ENCODE measurements at regions of chr5 and their contacts with region 1.

Region 1: DNA sequence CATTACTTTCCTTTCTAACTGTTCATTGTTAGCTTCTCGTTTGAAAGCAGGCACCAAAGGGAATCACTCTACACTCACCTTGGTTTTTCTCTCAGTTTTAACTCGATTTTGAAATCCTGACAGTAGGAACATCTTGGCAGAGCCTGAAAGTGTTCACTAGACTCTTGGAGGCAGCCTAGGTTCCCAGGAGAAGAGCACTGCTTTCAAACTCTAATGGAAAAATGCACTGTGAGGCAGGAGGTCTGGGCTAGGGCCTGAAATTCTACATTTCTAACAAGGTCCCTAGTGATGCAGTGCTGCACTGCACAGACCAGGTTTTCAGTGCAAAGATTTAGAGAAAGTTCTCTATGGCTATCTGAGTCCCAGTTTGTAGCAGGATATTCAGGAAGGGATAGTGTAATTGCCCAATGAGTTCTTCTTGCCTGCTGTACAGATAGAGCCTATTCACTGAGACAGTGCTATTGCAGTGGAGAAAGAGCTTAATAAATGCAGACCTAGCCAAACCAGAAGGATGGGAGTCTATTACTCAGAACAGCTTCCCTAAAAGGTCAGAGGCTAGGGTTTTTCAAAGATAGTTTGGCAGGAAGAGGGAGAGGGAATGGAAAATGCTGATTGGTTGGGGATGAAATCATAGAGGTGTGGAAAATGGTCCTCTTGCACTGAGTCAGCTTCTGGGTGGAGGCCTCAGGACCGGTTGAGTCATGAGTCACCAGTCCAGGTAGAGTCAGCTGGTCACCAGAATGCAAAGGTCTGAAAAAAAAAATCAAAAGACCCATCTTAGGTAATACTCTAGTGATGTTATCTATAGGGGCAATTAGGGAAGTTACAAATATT is 153.9 kb downstream of the GPBP1 start:
- DNase-seq: no peak
- H3K4me3 ChIP-seq: no peak overlapping the region
- H3K27ac ChIP-seq: no peak overlapping the region
- H3K4me1 ChIP-seq: no peaks in the 10 kb centered on the region
- CTCF ChIP-seq: no peak

Region 2: DNA sequence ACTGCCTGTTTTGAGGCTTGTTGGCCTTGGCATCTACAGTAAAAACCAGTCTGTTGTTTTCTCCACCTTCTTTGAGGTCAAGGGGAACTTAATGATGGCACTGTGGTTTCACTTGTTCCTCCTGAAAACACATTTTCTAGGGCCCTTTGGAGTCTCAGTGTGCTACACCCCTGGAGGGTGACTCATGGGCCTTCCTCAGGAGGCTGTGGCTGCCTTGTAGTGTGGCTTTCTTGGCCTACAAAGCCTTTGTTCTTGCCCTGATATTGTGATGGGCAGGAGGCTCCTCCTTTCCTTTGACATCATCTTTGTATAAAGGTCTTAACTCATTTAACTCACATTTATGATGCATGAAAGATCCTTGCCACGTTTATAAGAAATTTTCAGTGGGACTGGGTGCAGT is 210.2 kb before region 1 on chr5:
- CTCF ChIA-PET with region 1: no interaction called
- POLR2A ChIA-PET with region 1: no interaction called
- intact Hi-C with region 1: no loop called
- DNase-seq: no peak
- H3K4me3 ChIP-seq: no peak overlapping the region
- H3K27ac ChIP-seq: no peak overlapping the region
- H3K4me1 ChIP-seq: no peaks in the 10 kb centered on the region
- CTCF ChIP-seq: no peak

Region 3: DNA sequence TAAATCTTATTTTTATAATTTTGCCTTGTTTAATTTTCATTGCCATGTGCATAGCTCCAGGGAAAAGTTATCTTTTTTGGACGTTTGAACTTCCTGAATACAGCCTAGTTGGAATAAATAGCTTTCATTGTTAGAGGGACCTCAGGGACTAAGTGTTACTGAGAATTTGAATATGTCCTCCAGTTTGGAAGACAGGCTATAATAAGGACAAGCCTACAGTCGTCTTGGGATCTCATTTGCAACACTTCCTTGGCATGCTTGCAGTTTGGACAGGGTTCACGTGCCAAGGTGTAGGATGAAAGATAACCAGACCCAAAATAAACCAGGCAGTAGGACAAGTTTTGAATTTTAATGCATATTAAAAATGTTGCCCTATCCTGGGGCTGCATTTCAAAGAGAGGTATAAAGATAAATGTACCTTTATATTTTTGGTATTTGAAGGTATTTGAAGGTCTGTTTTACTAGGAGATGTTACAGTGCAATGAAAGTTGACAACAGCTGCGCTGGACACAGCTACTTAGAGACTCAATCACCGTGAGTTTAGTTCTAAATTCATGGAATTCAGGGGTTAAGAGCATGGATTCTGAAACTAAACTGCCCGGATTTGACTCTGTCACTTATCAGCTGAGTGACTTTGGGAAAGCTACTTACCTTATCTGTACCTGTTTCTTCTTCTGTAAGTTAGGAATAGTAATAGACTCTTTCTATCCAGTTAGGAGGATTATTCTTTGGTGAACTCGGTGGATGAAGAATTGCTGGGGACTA is 20.8 kb after region 1 on chr5:
- CTCF ChIA-PET with region 1: no interaction called
- POLR2A ChIA-PET with region 1: no interaction called
- intact Hi-C with region 1: no loop called
- DNase-seq: no peak
- H3K4me3 ChIP-seq: no peak overlapping the region
- H3K27ac ChIP-seq: no peak overlapping the region
- H3K4me1 ChIP-seq: no peaks in the 10 kb centered on the region
- CTCF ChIP-seq: no peak

Region 4: DNA sequence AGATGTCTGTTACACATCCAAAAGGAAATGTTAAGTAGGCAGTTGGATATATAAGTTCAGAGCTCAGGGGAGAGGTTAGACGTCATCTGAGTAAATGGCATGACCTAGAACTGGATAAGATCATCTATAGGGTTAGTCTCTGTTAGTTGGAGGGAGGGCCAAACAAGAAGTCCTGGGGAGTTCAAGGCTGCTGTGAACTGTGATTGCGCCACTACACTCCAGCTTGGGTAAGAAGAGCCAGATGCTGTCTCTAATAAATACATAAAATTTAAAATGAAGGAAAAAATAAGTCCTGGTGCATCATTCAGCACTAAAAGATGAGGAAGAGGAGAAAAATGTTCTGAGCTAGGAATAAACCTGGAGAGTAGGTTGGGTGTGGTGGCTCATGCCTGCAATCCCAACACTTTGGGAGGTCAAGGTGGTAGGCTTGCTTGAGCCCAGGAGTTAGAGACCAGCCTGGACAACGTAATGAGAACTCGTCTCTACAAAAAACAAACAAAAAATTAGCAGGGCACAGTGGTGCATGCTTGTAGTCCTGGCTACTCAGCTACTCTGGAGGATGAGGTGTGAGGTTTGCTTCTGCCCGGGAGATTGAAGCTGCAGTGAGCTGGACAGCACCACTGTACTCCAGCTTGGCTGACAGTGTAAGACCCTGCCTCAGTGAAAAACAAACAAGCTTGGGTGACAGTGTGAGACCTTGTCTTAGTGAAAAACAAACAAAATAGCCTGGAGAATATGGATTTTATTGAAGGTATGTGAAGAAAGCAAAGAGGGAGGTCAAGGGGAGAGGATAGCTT is 31.2 kb after region 1 on chr5:
- CTCF ChIA-PET with region 1: no interaction called
- POLR2A ChIA-PET with region 1: no interaction called
- intact Hi-C with region 1: loop called (anchors 1 kb)
- DNase-seq: no peak
- H3K4me3 ChIP-seq: no peak overlapping the region
- H3K27ac ChIP-seq: no peak overlapping the region
- H3K4me1 ChIP-seq: no peaks in the 10 kb centered on the region
- CTCF ChIP-seq: no peak

Measured in OCI-LY7 (cell line).